HepG2 (cell line): ENCODE measurements at regions of chr16 and their contacts with region 1.

Region 1: DNA sequence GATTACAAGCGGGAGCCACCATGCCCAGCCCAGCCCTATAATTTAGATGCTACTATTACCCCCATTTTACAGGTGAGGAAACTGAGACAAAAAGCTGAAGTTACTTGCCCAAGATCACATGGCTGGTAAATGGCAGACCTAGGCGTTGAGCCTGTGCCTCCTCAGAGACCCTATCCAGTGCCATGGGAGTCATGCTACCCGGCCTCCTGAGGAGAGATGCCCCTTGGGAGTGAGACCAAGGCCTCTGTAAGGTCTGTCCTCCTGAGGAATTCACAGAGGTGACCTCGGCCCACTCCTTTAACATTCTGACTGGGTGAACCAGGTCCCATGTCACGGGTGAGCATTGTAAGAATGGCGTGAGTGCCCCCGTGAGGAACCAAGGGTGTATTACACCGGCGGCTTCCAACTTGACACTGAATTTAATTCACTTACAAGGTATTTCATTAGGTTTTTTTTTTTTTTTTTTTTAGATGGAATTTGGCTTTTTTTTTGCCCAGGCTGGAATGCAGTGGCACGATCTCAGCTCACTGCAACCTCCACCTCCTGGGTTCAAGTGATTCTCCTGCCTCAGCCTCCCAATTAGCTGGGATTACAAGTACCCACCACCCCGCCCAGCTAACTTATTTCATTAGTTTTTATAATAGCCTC is 95.7 kb downstream of the ABCC6 start:
- DNase-seq: peak; percentile 72
- ATAC-seq: peak; percentile 85
- H3K4me3 ChIP-seq: no peak overlapping the region
- H3K27ac ChIP-seq: no peak overlapping the region
- H3K4me1 ChIP-seq: no peaks in the 10 kb centered on the region
- H3K27me3 ChIP-seq: no peaks in the 10 kb centered on the region
- CTCF ChIP-seq: peak; percentile 92
- EP300 ChIP-seq: no peak
- POLR2A ChIP-seq: no peak
- RAD21 ChIP-seq: peak; percentile 88

Region 2: DNA sequence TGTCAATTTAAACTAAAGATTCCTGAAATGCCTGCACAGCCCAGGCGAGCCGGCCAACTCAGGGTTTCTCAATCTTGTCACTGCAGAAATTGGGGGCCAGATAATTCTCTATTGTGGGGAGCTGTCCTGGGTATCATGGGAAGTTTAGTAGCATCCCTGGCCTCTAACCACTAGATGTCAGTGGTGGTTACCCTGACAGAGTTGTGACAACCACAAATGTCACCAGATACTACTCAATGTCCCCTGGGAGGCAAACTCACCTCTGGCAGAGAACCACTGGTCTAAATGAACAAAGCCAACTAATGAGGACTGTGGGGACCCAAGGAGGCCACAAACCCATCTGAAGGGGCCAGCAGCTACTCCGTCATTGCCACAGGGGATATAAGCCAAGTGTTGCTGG is 361.7 kb before region 1 on chr16:
- CTCF ChIA-PET with region 1: interaction called, 18 read pairs
- POLR2A ChIA-PET with region 1: no interaction called
- in situ Hi-C with region 1: no loop called
- intact Hi-C with region 1: loop called (anchors 1 kb)
- DNase-seq: peak; percentile 73
- ATAC-seq: peak; percentile 96
- H3K4me3 ChIP-seq: no peak overlapping the region
- H3K27ac ChIP-seq: no peak overlapping the region
- H3K4me1 ChIP-seq: no peaks in the 10 kb centered on the region
- H3K27me3 ChIP-seq: peaks cover 0 to 10% of the 10 kb centered on the region in 2 experiments; a peak in 4 of 5 replicates
- CTCF ChIP-seq: peak; percentile 90
- EP300 ChIP-seq: no peak
- POLR2A ChIP-seq: no peak
- RAD21 ChIP-seq: peak; percentile 86

Region 3: GRCh38 chr16:15777533-15778203 is 349.9 kb before region 1 on chr16:
- CTCF ChIA-PET with region 1: interaction called, 5 read pairs
- POLR2A ChIA-PET with region 1: no interaction called
- in situ Hi-C with region 1: loop called (anchors 5 kb)
- intact Hi-C with region 1: no loop called
- DNase-seq: peak; percentile 85
- ATAC-seq: peak; percentile 97
- H3K4me3 ChIP-seq: no peak overlapping the region
- H3K27ac ChIP-seq: no peak overlapping the region
- H3K4me1 ChIP-seq: peaks cover 11% of the 10 kb centered on the region; the same call in 1 of the 2 replicates
- H3K27me3 ChIP-seq: peaks cover 0 to 21% of the 10 kb centered on the region in 2 experiments; a peak in 3 of 5 replicates
- CTCF ChIP-seq: peak; percentile 91
- EP300 ChIP-seq: no peak
- POLR2A ChIP-seq: no peak
- RAD21 ChIP-seq: peak; percentile 91

Region 4: DNA sequence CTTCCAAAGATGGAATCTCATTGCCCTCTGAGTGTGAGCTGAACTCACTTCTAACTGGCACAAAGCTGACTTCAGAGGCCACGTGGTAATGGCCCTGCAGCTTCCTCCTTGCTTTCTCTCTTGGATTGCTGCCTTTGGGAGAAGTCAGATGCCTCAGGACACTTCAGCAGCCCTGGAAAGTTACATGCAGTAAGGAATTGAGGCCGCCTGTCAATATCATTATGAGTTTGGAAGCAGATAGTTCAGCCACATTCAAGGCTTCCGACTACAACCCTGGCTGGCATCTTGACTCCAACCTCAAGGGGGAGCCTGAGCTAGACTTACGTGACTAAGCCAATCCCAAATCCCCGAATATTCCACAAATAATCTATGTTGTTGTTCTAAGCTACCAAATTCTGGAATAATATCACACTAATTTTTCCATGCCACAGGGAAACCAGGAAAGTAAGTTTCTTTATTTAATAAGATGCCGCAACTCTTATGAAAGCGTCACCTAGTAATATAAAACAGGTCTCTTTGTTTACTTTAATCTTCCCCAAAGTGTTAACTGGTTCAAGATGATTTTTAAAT is 252.8 kb before region 1 on chr16:
- CTCF ChIA-PET with region 1: interaction called, 48 read pairs
- POLR2A ChIA-PET with region 1: no interaction called
- in situ Hi-C with region 1: loop called (anchors 5 kb)
- intact Hi-C with region 1: loop called (anchors 1 kb)
- DNase-seq: peak; percentile 70
- ATAC-seq: peak; percentile 95
- H3K4me3 ChIP-seq: no peak overlapping the region
- H3K27ac ChIP-seq: no peak overlapping the region
- H3K4me1 ChIP-seq: peaks cover 7% of the 10 kb centered on the region
- H3K27me3 ChIP-seq: no peaks in the 10 kb centered on the region
- CTCF ChIP-seq: peak; percentile 86
- EP300 ChIP-seq: no peak
- POLR2A ChIP-seq: no peak
- RAD21 ChIP-seq: peak; percentile 83

Region 5: GRCh38 chr16:15899538-15900100 is 228.0 kb before region 1 on chr16:
- CTCF ChIA-PET with region 1: no interaction called
- POLR2A ChIA-PET with region 1: no interaction called
- in situ Hi-C with region 1: no loop called
- intact Hi-C with region 1: no loop called
- DNase-seq: peak; percentile 95
- ATAC-seq: peak; percentile 95
- H3K4me3 ChIP-seq: no peak overlapping the region
- H3K27ac ChIP-seq: peak overlapping the region; percentile 3
- H3K4me1 ChIP-seq: peaks cover 62% of the 10 kb centered on the region
- H3K27me3 ChIP-seq: no peaks in the 10 kb centered on the region
- CTCF ChIP-seq: 0 out of 2 replicates have a peak, but pooled peaks have one; percentile 4
- EP300 ChIP-seq: peak in 1 of 2 experiments; percentile 79; a peak in 2 of 4 replicates
- POLR2A ChIP-seq: no peak
- RAD21 ChIP-seq: 0 out of 2 replicates have a peak, but pooled peaks have one; percentile 25

Region 6: DNA sequence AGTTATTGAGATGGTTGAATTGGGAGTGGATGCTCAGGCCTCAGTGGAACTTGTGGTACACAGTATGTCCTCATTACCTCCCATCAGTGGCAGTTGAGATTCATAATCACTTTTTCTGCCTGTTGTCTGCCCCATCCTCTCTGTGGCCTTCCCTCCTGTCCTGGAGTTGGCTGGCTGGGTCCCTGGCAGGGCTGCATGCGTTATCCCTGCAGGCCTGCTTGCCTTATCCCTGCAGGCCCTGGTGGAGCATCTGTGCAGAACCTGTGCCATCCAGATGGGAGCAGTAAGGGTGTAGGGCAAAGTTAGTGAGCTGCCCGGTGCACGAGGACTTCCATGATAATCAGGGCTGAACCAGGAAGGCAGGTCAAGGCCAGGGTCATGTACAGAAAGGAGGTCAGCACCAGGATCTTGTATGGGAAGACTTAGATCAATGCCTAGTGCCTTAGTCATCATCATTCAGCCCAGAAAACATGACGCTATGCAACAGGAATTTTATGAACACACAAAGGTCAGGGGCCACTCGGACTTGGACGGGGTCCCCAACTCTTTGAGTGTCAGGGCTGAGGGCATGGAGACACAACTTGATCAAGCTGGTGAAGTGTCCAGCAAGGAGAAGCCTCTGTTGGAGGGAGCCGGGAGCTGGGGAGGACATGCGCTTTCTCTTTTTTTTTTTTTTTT is 131.0 kb before region 1 on chr16:
- CTCF ChIA-PET with region 1: no interaction called
- POLR2A ChIA-PET with region 1: no interaction called
- in situ Hi-C with region 1: no loop called
- intact Hi-C with region 1: loop called (anchors 5 kb)
- DNase-seq: peak; percentile 99
- ATAC-seq: peak; percentile 85
- H3K4me3 ChIP-seq: 0 out of 6 replicates have a peak overlapping the region, but pooled peaks of 1 of the 3 experiments have one; percentile 1
- H3K27ac ChIP-seq: peak overlapping the region; percentile 7
- H3K4me1 ChIP-seq: peaks cover 41% of the 10 kb centered on the region
- H3K27me3 ChIP-seq: no peaks in the 10 kb centered on the region
- CTCF ChIP-seq: peak; percentile 72
- EP300 ChIP-seq: peak; percentile 64 to 86; a peak in 3 of 4 replicates
- POLR2A ChIP-seq: no peak
- RAD21 ChIP-seq: peak; percentile 79; the same call in 1 of the 2 replicates